Naive thymus-derived CD4-positive, alpha-beta T cell (primary cell): ENCODE measurements at regions of chr10 and their contacts with region 1.

Region 1: GRCh38 chr10:29517352-29517923 is 117.3 kb downstream of the SVIL start:
- DNase-seq: no peak
- ATAC-seq: no peak
- H3K4me3 ChIP-seq: no peak overlapping the region
- H3K4me3 Mint-ChIP-seq: no peak overlapping the region
- H3K27ac ChIP-seq: no peak overlapping the region
- H3K27ac Mint-ChIP-seq: peak overlapping the region in 1 of 9 donors; percentile 17
- H3K4me1 ChIP-seq: no peaks in the 10 kb centered on the region
- H3K4me1 Mint-ChIP-seq: peaks cover 0 to 2% (median 0%) of the 10 kb centered on the region in 7 donors
- H3K27me3 ChIP-seq: no peaks in the 10 kb centered on the region
- H3K27me3 Mint-ChIP-seq: no peaks in the 10 kb centered on the region

Region 2: GRCh38 chr10:29328983-29329382 is 188.5 kb before region 1 on chr10:
- CTCF ChIA-PET with region 1: no interaction called
- POLR2A ChIA-PET with region 1: no interaction called
- intact Hi-C with region 1: no loop called
- DNase-seq: no peak
- ATAC-seq: no peak
- H3K4me3 ChIP-seq: no peak overlapping the region
- H3K4me3 Mint-ChIP-seq: no peak overlapping the region
- H3K27ac ChIP-seq: no peak overlapping the region
- H3K27ac Mint-ChIP-seq: no peak overlapping the region
- H3K4me1 ChIP-seq: no peaks in the 10 kb centered on the region
- H3K4me1 Mint-ChIP-seq: no peaks in the 10 kb centered on the region
- H3K27me3 ChIP-seq: no peaks in the 10 kb centered on the region
- H3K27me3 Mint-ChIP-seq: peaks cover 6 to 30% (median 11%) of the 10 kb centered on the region in 5 donors

Region 3: GRCh38 chr10:29377333-29377961 is 140.0 kb before region 1 on chr10:
- CTCF ChIA-PET with region 1: no interaction called
- POLR2A ChIA-PET with region 1: no interaction called
- intact Hi-C with region 1: loop called in 1 of 2 experiments (anchors 5 kb)
- DNase-seq: peak in 4 of 9 donors; percentile 6 to 25 (median 14)
- ATAC-seq: no peak
- H3K4me3 ChIP-seq: no peak overlapping the region
- H3K4me3 Mint-ChIP-seq: no peak overlapping the region
- H3K27ac ChIP-seq: no peak overlapping the region
- H3K27ac Mint-ChIP-seq: no peak overlapping the region
- H3K4me1 ChIP-seq: no peaks in the 10 kb centered on the region
- H3K4me1 Mint-ChIP-seq: peaks cover 2 to 12% (median 8%) of the 10 kb centered on the region in 7 donors
- H3K27me3 ChIP-seq: peaks cover 0 to 3% of the 10 kb centered on the region in 2 donors
- H3K27me3 Mint-ChIP-seq: peaks cover 0 to 9% (median 3%) of the 10 kb centered on the region in 5 donors

Region 4: GRCh38 chr10:29555746-29556481 is 38.5 kb after region 1 on chr10:
- CTCF ChIA-PET with region 1: no interaction called
- POLR2A ChIA-PET with region 1: no interaction called
- intact Hi-C with region 1: no loop called
- DNase-seq: no peak
- ATAC-seq: no peak
- H3K4me3 ChIP-seq: no peak overlapping the region
- H3K4me3 Mint-ChIP-seq: no peak overlapping the region
- H3K27ac ChIP-seq: no peak overlapping the region
- H3K27ac Mint-ChIP-seq: peak overlapping the region in 1 of 9 donors; percentile 18
- H3K4me1 ChIP-seq: no peaks in the 10 kb centered on the region
- H3K4me1 Mint-ChIP-seq: peaks cover 0 to 22% (median 0%) of the 10 kb centered on the region in 7 donors
- H3K27me3 ChIP-seq: no peaks in the 10 kb centered on the region
- H3K27me3 Mint-ChIP-seq: no peaks in the 10 kb centered on the region